WTC11 (cell line): ENCODE measurements at regions of chr22 and their contacts with region 1.

Region 1: GRCh38 chr22:24156913-24157821 is 24.1 kb upstream of the SUSD2 start:
- DNase-seq: peak; percentile 93
- ATAC-seq: peak; percentile 90
- H3K4me3 Mint-ChIP-seq: peak overlapping the region; percentile 75
- H3K27ac Mint-ChIP-seq: no peak overlapping the region
- H3K4me1 Mint-ChIP-seq: peaks cover 21% of the 10 kb centered on the region
- H3K27me3 Mint-ChIP-seq: 0 out of 2 replicates have a peak, but pooled peaks cover 3% of the 10 kb centered on the region
- CTCF ChIP-seq: peak; percentile 64

Region 2: DNA sequence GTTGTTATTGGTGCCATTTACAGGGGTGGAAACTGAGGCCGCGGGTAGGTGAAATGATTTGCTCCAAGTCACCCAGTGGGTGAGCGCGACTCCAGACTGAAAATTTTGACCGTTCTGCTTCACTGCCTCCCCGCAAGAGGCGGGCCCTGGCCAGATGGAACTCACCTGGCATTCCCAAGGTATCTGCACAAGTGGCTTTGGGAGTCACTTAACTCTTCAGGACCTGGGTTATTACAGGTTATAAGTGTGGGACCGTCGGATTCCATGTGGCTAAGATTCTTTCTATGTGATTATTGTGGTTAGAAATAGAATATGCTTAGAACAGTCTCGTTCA is 145.5 kb before region 1 on chr22:
- CTCF ChIA-PET with region 1: interaction called, 15 read pairs
- POLR2A ChIA-PET with region 1: interaction called, 5 read pairs
- DNase-seq: no peak
- ATAC-seq: no peak; the same call in 1 of the 2 replicates
- H3K4me3 Mint-ChIP-seq: peak overlapping the region; percentile 85
- H3K27ac Mint-ChIP-seq: peak overlapping the region; percentile 55
- H3K4me1 Mint-ChIP-seq: peaks cover 4% of the 10 kb centered on the region
- H3K27me3 Mint-ChIP-seq: peaks cover 15% of the 10 kb centered on the region
- CTCF ChIP-seq: no peak

Region 3: DNA sequence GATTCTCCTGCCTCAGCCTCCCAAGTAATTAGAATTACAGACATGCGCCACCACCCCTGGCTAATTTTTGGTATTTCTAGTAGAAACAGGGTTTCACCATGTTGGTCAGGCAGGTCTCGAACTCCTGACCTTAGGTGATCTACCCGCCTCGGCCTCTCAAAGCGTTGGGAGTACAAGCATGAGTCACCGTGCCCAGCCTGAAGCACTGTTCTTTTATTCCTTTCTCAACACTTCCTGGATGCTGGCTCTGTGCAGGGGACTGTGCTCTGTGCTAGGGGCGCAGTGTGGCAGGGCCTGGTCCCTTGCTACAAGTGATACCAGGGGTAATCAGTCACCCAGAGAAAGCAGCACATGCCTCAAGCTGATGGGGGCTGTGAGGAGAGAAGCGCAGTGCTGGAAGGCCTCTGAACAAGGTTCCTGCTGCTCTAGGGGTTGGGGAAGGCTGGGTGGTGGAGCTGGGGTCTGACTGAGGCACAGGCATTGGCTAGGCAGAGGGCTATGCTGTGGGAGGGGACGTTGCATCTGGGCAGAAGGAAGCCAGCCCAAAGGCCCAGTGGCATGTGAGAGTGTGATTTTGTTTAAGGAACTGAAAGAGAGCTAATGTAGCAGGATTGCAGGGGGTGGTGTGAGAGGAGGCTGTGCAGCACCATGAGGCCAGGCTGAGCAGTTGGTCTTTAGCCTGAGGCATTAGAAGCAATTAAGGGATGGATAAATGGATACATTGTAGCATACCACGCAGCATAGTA is 103.5 kb before region 1 on chr22:
- CTCF ChIA-PET with region 1: no interaction called
- POLR2A ChIA-PET with region 1: no interaction called
- DNase-seq: no peak
- ATAC-seq: no peak
- H3K4me3 Mint-ChIP-seq: no peak overlapping the region
- H3K27ac Mint-ChIP-seq: no peak overlapping the region
- H3K4me1 Mint-ChIP-seq: no peaks in the 10 kb centered on the region
- H3K27me3 Mint-ChIP-seq: no peaks in the 10 kb centered on the region
- CTCF ChIP-seq: no peak

Region 4: DNA sequence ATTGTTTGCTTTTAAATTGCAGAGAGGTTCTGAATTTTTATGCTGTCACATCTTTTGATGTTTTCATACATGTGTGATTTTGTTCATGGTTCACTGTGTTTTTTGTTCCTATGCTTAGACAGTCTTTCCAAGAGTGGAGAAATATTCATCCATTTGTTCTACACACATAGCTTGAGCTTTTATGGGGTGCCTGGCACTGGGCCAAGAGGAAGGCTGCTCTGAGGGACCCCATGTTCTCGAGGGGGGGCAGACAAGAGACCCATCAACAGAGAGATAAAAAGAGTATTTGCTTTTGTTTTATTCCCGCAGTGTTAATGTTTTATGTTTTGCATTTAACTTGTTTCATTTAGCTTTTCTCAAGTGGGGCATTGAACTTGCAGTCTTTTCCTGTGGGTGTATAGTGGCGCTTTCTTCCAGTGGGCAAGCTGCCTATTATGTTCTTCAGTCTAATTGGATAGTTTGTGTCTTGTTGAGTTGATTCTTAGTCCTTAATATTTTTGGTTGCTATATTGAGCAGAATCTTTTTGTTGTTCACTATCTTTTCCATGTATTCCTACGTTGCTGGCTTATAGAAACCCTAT is 88.4 kb before region 1 on chr22:
- CTCF ChIA-PET with region 1: no interaction called
- POLR2A ChIA-PET with region 1: no interaction called
- DNase-seq: no peak
- ATAC-seq: no peak
- H3K4me3 Mint-ChIP-seq: no peak overlapping the region
- H3K27ac Mint-ChIP-seq: 0 out of 2 replicates have a peak overlapping the region, but pooled peaks have one; percentile 17
- H3K4me1 Mint-ChIP-seq: no peaks in the 10 kb centered on the region
- H3K27me3 Mint-ChIP-seq: no peaks in the 10 kb centered on the region
- CTCF ChIP-seq: no peak

Region 5: GRCh38 chr22:24106385-24107381 is 50.5 kb before region 1 on chr22:
- CTCF ChIA-PET with region 1: interaction called, 43 read pairs
- POLR2A ChIA-PET with region 1: no interaction called
- DNase-seq: peak; percentile 28
- ATAC-seq: peak; percentile 57; the same call in 1 of the 2 replicates
- H3K4me3 Mint-ChIP-seq: no peak overlapping the region
- H3K27ac Mint-ChIP-seq: peak overlapping the region; percentile 23; the same call in 1 of the 2 replicates
- H3K4me1 Mint-ChIP-seq: no peaks in the 10 kb centered on the region
- H3K27me3 Mint-ChIP-seq: no peaks in the 10 kb centered on the region
- CTCF ChIP-seq: no peak

Region 6: DNA sequence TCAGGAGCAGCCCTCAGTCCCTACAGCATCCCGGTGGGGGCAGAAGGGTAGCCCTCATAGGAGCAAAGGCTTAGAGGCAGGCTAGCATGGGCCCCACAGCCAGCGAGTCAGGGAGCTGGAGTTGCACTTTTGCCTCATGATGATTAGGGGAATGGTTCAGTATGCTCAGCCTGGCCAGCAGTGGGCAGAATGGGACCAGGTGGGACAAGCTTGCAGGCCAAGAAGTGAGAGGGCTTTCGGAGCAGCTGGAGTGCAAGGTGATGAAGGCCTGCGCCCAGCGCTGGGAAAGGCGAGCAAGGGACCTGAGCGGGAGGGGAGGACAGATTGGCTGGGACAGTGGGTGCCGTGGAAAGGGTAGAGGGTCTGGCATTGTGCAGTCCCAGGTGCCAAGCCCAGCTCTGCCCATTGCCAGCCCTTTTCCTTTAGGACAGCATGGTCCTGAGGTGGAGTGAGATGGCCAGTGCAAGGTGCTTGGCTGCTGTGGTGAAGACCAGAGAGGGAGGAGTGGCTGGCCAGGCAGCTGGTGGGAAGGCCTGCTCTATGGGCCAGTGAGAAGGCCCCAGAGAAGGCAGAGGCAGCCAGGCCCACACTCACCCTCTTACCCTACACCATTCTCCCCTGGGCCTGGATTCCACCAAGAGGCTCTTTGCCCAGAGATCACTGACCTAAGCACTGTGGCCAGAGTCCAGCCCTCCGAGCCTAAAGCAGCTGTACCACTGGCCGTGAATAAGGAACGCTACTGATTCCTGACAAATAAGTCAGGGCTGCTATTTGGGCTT is 23.8 kb before region 1 on chr22:
- CTCF ChIA-PET with region 1: interaction called, 40 read pairs
- POLR2A ChIA-PET with region 1: no interaction called
- DNase-seq: peak; percentile 42
- ATAC-seq: peak; percentile 74
- H3K4me3 Mint-ChIP-seq: no peak overlapping the region
- H3K27ac Mint-ChIP-seq: peak overlapping the region; percentile 80; the same call in 1 of the 2 replicates
- H3K4me1 Mint-ChIP-seq: peaks cover 4% of the 10 kb centered on the region; the same call in 1 of the 2 replicates
- H3K27me3 Mint-ChIP-seq: no peaks in the 10 kb centered on the region
- CTCF ChIP-seq: no peak

Region 7: DNA sequence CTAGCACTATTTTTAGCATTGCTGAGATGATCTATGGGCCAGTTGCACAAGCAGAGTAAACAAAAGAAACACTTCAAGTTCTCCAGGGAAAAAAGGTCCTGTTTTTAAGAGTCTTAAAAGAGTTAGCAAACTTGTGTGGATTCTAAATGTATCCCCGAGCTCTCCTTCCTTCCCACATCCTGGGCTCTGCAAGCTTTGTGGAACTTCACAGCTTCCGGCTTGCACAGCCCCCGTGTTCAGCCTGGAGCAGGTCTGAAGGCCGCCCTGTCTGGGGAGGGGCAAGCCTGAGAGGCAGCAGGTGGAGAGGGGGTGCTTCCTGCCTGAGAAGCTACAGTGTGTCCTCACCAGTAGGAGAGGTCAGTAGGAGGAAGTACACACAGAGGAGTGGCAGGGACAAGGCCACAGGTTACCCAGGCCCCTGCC is 11.0 kb before region 1 on chr22:
- CTCF ChIA-PET with region 1: interaction called, 99 read pairs
- POLR2A ChIA-PET with region 1: interaction called, 9 read pairs
- DNase-seq: peak; percentile 66
- ATAC-seq: peak; percentile 94
- H3K4me3 Mint-ChIP-seq: no peak overlapping the region
- H3K27ac Mint-ChIP-seq: peak overlapping the region; percentile 92
- H3K4me1 Mint-ChIP-seq: peaks cover 27% of the 10 kb centered on the region
- H3K27me3 Mint-ChIP-seq: no peaks in the 10 kb centered on the region
- CTCF ChIP-seq: no peak

Region 8: DNA sequence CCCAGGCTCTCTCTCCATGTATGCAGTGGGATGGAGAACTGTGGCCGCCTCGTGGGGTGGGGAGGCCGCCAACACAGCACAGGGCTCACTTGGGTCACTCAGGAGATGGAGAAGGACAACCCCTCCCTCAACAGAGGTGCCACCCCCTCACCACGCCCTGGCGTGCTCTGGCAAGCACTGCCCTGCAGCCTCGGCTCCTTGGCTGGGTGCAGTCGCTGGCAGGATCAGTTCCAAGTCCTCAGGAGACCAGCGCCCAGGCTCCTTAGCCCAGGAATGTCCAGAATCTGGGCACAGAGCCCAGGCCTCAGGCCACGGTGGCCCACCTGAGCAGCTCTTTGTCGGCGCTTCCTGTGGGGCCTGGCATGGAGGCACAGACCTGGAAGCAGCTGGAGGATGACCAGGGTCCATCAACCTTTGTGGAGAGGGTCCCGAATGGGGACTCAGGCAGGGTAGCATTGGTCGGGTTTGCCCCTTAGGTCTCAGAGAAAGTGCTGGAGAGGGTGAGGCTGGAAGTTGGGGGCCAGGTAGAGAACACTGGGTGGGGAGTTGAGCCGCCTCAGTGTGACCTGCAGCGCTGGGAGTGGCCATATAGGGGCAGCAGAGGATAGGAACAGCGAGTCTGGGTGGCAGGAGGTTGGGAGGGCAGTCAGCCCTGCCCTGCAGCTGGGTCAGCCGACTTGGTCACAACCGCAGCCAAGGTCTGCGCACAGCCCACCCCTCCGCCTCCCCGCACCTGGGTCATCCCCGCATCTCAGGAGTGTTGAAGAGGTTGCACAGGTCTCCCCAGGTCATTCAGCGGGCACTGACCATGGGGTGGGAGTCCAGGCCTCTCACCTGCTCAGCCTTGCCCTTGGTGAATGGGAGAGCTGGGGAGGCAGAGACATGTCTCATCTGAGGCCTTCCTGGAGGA is 32.3 kb after region 1 on chr22:
- CTCF ChIA-PET with region 1: interaction called, 14 read pairs
- POLR2A ChIA-PET with region 1: no interaction called
- DNase-seq: peak; percentile 86
- ATAC-seq: peak; percentile 97
- H3K4me3 Mint-ChIP-seq: no peak overlapping the region
- H3K27ac Mint-ChIP-seq: no peak overlapping the region
- H3K4me1 Mint-ChIP-seq: peaks cover 3% of the 10 kb centered on the region; the same call in 1 of the 2 replicates
- H3K27me3 Mint-ChIP-seq: no peaks in the 10 kb centered on the region; the same call in 1 of the 2 replicates
- CTCF ChIP-seq: peak; percentile 65; the same call in 1 of the 2 replicates

Region 9: GRCh38 chr22:24244101-24244787 is 87.1 kb after region 1 on chr22:
- CTCF ChIA-PET with region 1: interaction called, 11 read pairs
- POLR2A ChIA-PET with region 1: no interaction called
- DNase-seq: no peak
- ATAC-seq: no peak
- H3K4me3 Mint-ChIP-seq: no peak overlapping the region
- H3K27ac Mint-ChIP-seq: no peak overlapping the region
- H3K4me1 Mint-ChIP-seq: peaks cover 18% of the 10 kb centered on the region
- H3K27me3 Mint-ChIP-seq: no peaks in the 10 kb centered on the region
- CTCF ChIP-seq: no peak